Activated naive CD4-positive, alpha-beta T cell treated with anti-CD3 and anti-CD28 coated beads for 36 hours (primary cell): ENCODE measurements at regions of chr15 and their contacts with region 1.

Region 1: DNA sequence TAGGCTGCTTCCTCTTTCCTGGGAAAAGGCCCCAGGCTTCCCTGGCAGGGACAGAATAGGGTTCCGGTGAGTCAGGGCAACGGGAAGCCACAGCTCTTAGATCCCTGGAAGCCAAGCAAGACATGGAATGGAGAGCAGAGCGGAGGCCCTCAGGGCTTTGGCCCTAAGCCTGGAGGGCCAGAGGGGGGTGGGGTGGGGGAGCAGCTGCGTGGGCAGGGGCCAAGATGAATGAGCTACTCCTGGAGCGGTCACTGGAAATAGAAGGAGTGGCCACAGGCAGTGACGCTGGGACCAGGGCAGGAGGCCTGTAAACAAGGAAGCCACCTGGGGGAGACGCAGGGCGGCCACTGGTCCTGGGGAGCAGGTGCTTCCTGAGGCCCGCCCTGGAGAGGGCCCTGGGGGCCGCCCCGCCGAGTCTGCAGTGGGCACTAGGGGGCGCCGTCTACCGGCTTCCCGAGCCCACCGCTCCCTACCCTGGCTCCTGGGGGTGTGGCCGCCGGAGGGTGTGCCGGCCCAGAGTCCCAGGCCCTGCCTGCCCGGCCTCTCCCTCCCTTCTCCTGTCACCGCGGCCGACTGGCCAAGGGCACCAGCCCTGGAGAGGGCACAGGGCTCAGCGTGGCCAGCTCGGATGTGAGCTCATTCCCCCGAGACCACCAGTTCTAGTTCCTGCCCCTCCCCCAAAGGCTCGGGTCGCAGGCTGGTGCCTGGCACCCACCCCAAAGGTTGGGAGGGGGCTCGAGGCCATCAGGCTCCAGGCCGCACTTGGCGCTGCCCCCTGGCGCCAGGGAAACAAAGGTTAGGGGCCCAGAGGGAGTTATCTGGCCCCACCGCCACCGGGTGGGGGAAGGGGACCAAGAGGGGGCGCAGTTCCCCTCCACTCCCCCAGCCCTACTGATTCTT is 12.1 kb downstream of the VPS18 start:
- DNase-seq: peak; percentile 87
- H3K4me3 Mint-ChIP-seq: peak overlapping the region; percentile 73
- H3K27ac Mint-ChIP-seq: peak overlapping the region; percentile 24
- H3K4me1 Mint-ChIP-seq: peaks cover 21% of the 10 kb centered on the region
- H3K27me3 Mint-ChIP-seq: no peaks in the 10 kb centered on the region

Region 2: GRCh38 chr15:40928821-40929659 is 22.7 kb after region 1 on chr15 and contains the start of gene DLL4:
- CTCF ChIA-PET with region 1: interaction called, 34 read pairs
- intact Hi-C with region 1: loop called (anchors 1 kb)
- DNase-seq: peak; percentile 35
- H3K4me3 Mint-ChIP-seq: peak within 1 kb of the TSS; percentile 54
- H3K27ac Mint-ChIP-seq: no peak within 1 kb of the TSS
- H3K4me1 Mint-ChIP-seq: peaks cover 40% of the 10 kb centered on the region
- H3K27me3 Mint-ChIP-seq: peaks cover 66% of the 10 kb centered on the region
- total RNA-seq, gene DLL4: 0.14 TPM in 1 of 2 experiments, not detected in the other

Region 3: DNA sequence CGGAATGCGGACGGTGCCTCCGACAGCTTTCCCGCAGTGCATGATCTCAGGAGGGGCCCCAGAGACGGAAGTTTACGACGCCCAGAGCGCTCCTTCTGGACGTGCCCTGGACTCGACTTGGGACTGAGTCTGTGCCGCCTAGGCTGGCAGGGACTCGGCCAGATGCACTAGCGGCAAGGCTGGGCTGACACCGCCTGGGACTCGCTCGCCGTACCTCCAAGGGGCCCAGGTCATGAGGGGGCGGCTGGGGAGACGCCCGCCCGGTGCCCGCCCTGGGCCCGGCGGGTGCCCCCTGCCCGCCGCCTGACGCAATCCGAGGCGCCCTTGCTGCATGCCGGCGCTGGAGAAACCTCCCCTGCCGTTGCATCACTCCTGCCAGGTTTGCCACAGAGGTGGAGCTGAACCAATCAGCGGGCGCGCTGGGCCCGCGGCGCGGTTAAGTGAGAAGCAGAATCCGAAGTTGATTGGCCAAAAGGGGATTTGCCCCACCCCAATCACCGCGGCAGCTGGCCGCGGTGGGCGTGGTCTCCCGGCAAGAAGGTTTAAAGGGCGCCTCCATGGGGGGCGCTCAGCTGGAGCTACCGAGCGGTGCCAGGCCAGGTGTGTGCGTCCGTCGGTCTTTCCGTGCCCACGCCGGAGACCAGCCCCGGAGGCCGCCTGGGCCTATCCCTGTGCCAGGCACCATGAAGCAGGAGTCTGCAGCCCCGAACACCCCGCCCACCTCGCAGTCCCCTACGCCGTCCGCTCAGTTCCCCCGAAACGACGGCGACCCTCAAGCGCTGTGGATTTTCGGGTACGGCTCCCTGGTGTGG is 46.8 kb after region 1 on chr15 and contains the start of gene CHAC1:
- CTCF ChIA-PET with region 1: interaction called, 16 read pairs
- intact Hi-C with region 1: loop called (anchors 1 kb)
- DNase-seq: peak; percentile 99
- H3K4me3 Mint-ChIP-seq: peak within 1 kb of the TSS; percentile 94
- H3K27ac Mint-ChIP-seq: peak within 1 kb of the TSS; percentile 93
- H3K4me1 Mint-ChIP-seq: peaks cover 35% of the 10 kb centered on the region
- H3K27me3 Mint-ChIP-seq: no peaks in the 10 kb centered on the region
- total RNA-seq, gene CHAC1: 19.8 to 20.2 TPM

Region 4: DNA sequence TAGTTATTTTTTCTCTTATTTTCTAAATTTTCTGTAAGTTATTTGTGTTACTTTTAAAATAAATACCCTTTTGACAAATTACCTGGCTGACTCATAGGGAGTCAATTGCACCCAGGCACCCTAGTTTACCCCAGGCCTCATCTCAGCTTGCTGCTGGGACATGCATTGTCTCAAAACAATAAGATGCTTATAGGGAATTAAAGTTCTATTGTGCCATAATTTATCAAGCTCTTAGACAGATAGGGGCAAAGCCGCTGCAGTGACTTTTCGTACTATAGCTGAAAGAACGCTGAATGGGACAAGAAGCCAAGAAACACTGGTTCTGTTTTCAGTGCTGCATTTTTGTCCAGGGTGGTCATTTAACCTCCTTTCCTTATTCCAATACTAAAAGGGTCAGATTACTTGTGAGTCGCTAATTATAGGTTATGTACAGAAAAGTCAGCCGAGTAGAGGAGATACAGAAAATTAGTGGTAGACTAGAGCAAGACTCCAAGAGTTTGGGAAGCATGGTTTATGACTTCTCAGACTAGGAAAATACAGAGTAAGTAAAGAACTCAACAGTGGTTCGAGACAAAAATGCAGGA is 274.0 kb after region 1 on chr15:
- CTCF ChIA-PET with region 1: interaction called, 79 read pairs
- intact Hi-C with region 1: loop called (anchors 1 kb)
- DNase-seq: no peak
- H3K4me3 Mint-ChIP-seq: no peak overlapping the region
- H3K27ac Mint-ChIP-seq: no peak overlapping the region
- H3K4me1 Mint-ChIP-seq: no peaks in the 10 kb centered on the region
- H3K27me3 Mint-ChIP-seq: no peaks in the 10 kb centered on the region

Region 5: GRCh38 chr15:41207687-41208448 is 301.5 kb after region 1 on chr15:
- CTCF ChIA-PET with region 1: no interaction called
- intact Hi-C with region 1: no loop called
- DNase-seq: no peak
- H3K4me3 Mint-ChIP-seq: no peak overlapping the region
- H3K27ac Mint-ChIP-seq: no peak overlapping the region
- H3K4me1 Mint-ChIP-seq: no peaks in the 10 kb centered on the region
- H3K27me3 Mint-ChIP-seq: peaks cover 2% of the 10 kb centered on the region

Region 6: DNA sequence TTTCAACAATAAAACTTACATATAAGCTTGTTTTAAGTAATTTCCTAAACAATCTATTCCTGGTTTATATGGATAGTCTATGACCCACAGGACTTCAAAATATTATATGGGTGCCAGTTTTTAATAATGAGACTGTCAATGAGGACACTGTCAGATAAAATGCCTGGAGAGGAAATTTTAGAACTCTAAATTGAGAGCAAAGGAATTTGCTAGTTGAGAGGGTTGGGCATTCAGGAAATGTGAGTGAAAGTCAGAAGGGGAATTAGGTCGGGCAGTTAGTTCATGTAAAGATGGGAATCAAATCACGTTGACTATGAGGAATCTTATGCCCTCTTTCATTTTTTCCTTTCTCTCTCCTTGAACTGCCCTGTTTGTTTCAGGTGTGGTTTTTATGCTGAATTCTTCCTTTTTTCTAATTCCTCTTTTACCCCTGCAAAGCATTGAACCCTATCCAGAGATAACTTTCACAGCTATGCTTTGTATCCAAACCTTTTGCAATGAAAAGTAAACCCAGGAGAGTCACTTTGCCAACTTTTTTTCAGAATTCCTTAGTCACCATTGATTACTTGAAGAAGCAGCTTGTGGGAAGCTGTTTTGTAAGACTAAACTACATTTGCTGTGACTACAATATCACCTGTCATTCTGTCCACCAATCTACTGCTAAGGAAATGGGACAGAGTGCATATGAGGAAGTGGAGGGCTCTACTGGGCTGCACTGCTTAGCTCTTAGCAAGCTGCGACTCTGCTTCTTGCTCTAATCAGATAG is 352.5 kb after region 1 on chr15:
- CTCF ChIA-PET with region 1: no interaction called
- intact Hi-C with region 1: no loop called
- DNase-seq: no peak
- H3K4me3 Mint-ChIP-seq: no peak overlapping the region
- H3K27ac Mint-ChIP-seq: no peak overlapping the region
- H3K4me1 Mint-ChIP-seq: no peaks in the 10 kb centered on the region
- H3K27me3 Mint-ChIP-seq: no peaks in the 10 kb centered on the region

Region 7: DNA sequence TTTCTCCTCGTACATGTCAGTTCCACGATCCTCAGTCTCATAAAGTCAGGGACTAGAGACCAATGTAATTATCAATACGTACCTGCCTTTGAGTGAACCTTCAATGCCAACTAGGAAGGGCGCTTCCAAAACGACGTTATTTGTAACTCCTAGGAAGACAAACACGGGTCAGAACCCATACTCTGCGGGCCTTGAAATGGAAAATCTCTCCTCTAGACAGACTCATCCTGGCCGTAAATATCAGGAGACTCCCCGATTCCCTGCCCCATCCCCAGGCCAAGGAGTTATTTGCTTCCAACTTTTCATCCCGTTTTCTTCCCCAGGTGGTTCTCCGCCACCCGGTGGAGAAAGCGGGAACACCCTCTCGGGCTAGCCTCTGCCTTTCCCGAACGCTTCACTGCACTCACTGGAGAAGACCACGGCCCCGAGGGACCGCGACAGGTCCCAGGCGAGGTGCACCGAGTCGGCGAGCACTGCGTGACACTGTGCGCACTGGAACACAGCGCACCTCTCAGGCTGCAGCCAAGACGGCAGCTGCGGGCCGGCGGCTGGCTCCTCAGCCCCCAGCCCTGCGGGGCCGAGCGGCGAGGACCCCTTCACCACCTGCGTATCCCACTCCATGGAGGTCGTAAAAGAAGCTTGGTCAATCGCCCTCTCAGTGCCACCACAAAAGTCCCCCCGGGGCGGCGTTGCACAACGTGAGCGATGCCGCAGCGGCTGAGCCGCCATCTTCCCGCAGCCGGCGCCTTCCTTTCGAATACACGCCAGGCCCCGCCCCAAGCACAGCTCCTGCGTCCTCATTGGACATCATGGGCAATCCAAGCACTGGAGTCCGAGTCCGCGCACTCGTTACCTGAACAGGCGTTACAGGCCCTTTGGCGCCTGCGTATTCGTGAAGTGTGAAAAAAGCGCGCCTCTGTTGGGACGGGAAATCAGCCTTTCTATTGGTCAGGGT is 425.8 kb after region 1 on chr15 and contains the start of gene OIP5:
- CTCF ChIA-PET with region 1: interaction called, 3 read pairs
- intact Hi-C with region 1: loop called (anchors 1 kb)
- DNase-seq: peak; percentile 100
- H3K4me3 Mint-ChIP-seq: peak within 1 kb of the TSS; percentile 100
- H3K27ac Mint-ChIP-seq: peak within 1 kb of the TSS; percentile 98
- H3K4me1 Mint-ChIP-seq: peaks cover 26% of the 10 kb centered on the region
- H3K27me3 Mint-ChIP-seq: no peaks in the 10 kb centered on the region
- total RNA-seq, gene OIP5: 9.5 to 10.7 TPM